ENCODE measurements at regions of chr12 and their contacts with region 1.

Region 1: DNA sequence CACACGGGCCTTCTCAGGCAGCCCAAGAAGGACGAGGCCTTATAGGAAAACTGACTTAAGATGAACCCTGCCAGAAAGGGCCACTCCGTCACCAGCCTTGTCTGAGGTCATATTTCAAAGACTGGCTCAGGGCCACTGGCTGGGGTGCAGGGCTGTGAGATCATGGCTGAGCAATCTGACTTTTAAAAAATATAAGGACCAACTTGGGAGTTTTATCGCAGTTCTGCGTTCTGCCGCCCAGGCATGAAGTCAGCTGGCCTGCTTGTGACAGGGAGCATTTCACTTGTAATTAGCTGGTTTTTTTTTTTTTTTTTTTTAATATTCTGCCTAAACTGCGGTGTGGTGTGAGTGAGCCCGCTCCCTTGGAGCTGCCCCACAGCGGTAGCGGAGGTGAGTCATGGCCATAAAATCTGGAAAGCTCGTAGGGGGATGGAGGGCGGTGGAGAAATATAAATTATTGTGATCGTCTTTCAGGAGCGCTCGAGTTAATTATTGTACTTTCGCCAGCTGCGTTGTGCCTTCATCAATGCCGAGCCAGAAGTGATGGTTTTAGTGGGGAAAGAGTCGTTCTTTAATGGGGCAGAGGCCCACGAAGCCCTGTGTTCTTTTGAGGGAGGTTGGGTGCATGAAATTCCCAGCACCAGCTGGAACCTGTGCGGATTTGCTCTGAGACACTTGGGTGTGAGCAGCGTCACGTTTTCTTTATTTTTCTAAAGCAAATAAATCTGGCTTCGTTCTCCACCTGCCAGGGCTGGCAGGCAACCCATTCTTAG is 231.9 kb downstream of the C12orf75 start:
- DNase-seq: peak; percentile 74
- H3K4me3 Mint-ChIP-seq: peak overlapping the region; percentile 52
- H3K27ac Mint-ChIP-seq: peak overlapping the region; percentile 70
- H3K4me1 Mint-ChIP-seq: peaks cover 27% of the 10 kb centered on the region
- H3K27me3 Mint-ChIP-seq: peaks cover 9% of the 10 kb centered on the region
- CTCF ChIP-seq: no peak

Region 2: DNA sequence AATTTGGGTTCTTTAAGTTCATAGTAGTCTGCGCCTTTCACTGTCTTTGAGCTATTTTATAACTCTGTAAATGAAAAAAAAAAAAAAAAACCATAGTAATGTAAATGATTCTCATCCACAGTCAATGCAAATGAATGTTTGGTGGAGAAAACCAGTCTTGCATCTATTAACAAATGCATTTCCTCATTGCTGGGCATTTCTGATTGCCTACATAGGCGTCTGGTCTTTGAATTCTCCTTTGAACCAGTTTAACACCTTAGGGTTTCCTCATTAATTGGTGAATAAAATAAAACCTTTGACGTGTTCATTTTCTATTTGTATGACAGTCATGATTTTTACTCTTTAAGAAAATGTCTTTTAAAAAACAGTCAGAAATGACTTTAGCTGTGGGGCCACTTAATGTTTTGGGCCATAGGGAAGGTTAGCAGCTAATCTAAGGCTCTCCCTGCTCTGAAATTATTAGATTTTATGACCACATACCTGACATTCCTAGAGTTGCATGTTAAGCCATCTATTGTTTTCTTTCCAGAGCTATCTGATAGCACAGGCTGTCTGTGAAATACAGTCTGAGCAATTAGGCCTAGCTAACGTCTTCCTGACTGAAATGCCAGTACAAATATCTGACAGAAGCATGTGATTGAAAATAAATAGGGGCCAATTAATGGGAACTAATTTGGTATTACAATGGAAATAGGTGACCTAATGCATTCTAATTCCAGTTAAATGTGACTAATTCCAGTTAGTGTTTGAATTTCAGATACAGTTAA is 117.0 kb before region 1 on chr12:
- CTCF ChIA-PET with region 1: interaction called, 4 read pairs
- intact Hi-C with region 1: loop called (anchors 5 kb)
- DNase-seq: peak; percentile 21
- H3K4me3 Mint-ChIP-seq: no peak overlapping the region
- H3K27ac Mint-ChIP-seq: peak overlapping the region; percentile 96
- H3K4me1 Mint-ChIP-seq: peaks cover 36% of the 10 kb centered on the region
- H3K27me3 Mint-ChIP-seq: no peaks in the 10 kb centered on the region
- CTCF ChIP-seq: no peak

Measured in Calu3 (cell line).